ENCODE measurements at regions of chr2 and their contacts with region 1.

Region 1: DNA sequence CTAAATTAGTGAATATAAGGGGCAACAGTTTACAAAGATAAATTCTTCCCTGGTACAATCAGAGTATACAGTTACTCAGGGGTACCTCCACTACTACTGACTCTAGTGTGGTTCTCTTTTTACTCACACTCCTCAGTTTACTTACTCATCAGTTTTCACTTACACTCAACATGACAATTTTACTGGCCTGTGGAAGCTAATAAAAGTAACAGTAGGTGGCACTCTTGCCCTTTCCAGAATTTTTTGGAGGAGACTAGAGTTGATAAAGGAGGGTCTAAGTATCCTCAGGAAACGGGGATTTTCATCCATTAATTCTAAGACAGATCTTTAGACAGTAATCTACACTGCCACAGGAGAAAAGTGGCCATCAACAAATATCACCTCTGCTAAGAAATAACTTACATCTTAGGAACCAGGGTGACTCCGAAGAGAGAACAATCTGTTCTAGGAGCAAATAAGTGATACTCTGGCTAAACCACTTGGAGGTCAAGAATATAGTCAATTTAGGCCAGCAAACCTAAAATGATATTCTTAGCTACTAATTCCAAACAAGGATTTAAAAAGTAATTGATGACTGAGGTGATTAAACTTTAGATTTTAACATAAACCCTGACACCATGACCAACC is 61.3 kb downstream of the ATL2 start:
- DNase-seq: peak; percentile 1
- H3K4me3 ChIP-seq: no peak overlapping the region
- CTCF ChIP-seq: peak; percentile 55

Region 2: GRCh38 chr2:38327580-38327979 is 11.8 kb after region 1 on chr2:
- CTCF ChIA-PET with region 1: interaction called, 24 read pairs
- POLR2A ChIA-PET with region 1: no interaction called
- DNase-seq: no peak
- H3K4me3 ChIP-seq: no peak overlapping the region
- CTCF ChIP-seq: no peak

Region 3: DNA sequence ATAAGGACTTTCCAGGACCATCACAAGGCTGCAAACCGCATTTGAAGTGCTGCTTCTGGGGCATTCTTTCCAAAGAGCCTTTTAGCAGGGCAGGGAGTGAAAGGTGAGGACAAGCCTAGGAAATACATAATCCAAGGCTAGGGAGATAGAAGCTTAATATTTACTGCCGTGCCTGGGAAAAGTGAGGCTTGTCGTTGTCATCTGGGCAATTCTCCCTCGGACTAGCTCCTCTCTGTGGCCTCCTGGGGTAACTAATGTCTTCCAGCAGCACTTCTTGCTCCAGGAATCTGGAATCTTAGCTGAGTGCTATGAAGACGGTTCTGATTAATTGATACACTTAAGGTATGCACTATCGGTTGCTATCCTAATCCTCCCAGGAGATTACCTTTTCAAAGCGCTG is 130.6 kb after region 1 on chr2:
- CTCF ChIA-PET with region 1: interaction called, 14 read pairs
- POLR2A ChIA-PET with region 1: no interaction called
- DNase-seq: no peak
- H3K4me3 ChIP-seq: no peak overlapping the region
- CTCF ChIP-seq: peak; percentile 5

Region 4: DNA sequence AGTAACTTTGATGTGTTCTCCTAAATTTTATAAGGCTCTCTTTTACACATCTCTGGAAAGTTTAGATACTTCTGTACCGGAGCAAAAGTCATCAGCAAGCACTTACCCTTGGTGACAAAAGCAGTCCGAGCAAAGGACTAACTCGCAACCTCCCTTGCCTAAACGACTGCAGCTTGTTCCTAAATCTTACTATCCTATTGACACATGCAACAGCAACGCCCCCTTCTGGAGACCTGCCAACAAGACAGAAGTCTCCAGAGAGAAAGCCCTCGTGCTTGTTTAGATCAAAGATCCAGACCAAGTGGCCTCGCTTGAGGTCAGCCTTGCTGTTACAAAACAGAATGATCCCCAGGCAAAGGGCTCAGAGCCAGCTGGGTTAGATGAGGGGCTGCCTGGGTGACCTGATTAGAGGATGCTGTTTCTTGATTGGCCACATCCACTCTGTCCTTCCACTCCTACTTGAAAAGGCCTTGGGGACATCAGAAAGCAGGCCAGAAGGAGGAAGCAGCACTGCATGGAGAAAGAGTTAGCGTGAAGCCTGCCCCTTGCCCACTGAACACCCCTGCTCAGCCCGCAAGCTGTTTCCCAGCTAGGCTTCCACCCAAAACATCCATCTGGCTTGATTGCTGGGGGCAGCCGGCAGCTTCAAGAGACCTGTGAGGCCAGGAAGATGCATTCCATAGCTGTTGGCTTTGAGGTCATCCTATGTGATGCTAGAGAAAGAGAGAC is 192.7 kb after region 1 on chr2:
- CTCF ChIA-PET with region 1: interaction called, 38 read pairs
- POLR2A ChIA-PET with region 1: no interaction called
- DNase-seq: no peak
- H3K4me3 ChIP-seq: no peak overlapping the region
- CTCF ChIP-seq: peak; percentile 10

Region 5: GRCh38 chr2:38572167-38572566 is 256.3 kb after region 1 on chr2:
- CTCF ChIA-PET with region 1: interaction called, 10 read pairs
- POLR2A ChIA-PET with region 1: no interaction called
- DNase-seq: peak; percentile 23
- H3K4me3 ChIP-seq: no peak overlapping the region
- CTCF ChIP-seq: no peak